B cell (primary cell): ENCODE measurements at regions of chr3 and their contacts with region 1.

Region 1: GRCh38 chr3:187164885-187165543 is 25.7 kb upstream of the RPL39L start:
- DNase-seq: peak; percentile 81
- ATAC-seq: peak; percentile 72
- H3K4me3 ChIP-seq: no peak overlapping the region
- H3K4me3 Mint-ChIP-seq: no peak overlapping the region
- H3K27ac ChIP-seq: no peak overlapping the region
- H3K27ac Mint-ChIP-seq: no peak overlapping the region
- H3K4me1 ChIP-seq: no peaks in the 10 kb centered on the region
- H3K4me1 Mint-ChIP-seq: no peaks in the 10 kb centered on the region
- H3K27me3 ChIP-seq: peaks cover 0 to 6% (median 0%) of the 10 kb centered on the region in 4 experiments
- H3K27me3 Mint-ChIP-seq: peaks cover 23% of the 10 kb centered on the region
- CTCF ChIP-seq: peak; percentile 81

Region 2: DNA sequence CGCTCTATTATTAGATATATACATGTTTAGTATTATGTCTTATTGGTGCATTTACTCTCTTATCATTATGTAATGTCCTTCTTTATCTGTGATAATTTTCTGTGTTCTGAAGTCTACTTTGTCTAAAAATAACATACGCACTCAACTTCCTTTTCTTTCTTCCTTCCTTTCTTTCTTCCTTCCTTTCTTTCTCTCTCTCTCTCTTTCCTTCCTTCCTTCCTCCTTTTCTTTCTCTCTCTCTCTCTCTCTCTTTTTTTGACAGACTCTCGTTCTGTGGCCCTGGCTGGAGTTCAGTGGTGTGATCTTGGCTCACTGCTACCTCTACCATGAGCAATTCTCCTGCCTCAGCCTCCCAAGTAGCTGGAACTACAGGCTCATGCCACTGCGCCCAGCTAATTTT is 307.3 kb before region 1 on chr3:
- CTCF ChIA-PET with region 1: interaction called, 11 read pairs
- POLR2A ChIA-PET with region 1: no interaction called
- intact Hi-C with region 1: no loop called
- DNase-seq: no peak
- ATAC-seq: no peak
- H3K4me3 ChIP-seq: no peak overlapping the region
- H3K4me3 Mint-ChIP-seq: no peak overlapping the region
- H3K27ac ChIP-seq: no peak overlapping the region
- H3K27ac Mint-ChIP-seq: no peak overlapping the region
- H3K4me1 ChIP-seq: no peaks in the 10 kb centered on the region
- H3K4me1 Mint-ChIP-seq: peaks cover 5% of the 10 kb centered on the region
- H3K27me3 ChIP-seq: no peaks in the 10 kb centered on the region
- H3K27me3 Mint-ChIP-seq: no peaks in the 10 kb centered on the region
- CTCF ChIP-seq: no peak

Region 3: GRCh38 chr3:187107989-187108388 is 57.0 kb before region 1 on chr3:
- CTCF ChIA-PET with region 1: interaction called, 223 read pairs
- POLR2A ChIA-PET with region 1: interaction called, 3 read pairs
- intact Hi-C with region 1: loop called (anchors 1 kb)
- DNase-seq: no peak
- ATAC-seq: no peak
- H3K4me3 ChIP-seq: no peak overlapping the region
- H3K4me3 Mint-ChIP-seq: no peak overlapping the region
- H3K27ac ChIP-seq: no peak overlapping the region
- H3K27ac Mint-ChIP-seq: no peak overlapping the region
- H3K4me1 ChIP-seq: peaks cover 2 to 3% of the 10 kb centered on the region in 2 donors
- H3K4me1 Mint-ChIP-seq: peaks cover 3% of the 10 kb centered on the region
- H3K27me3 ChIP-seq: no peaks in the 10 kb centered on the region
- H3K27me3 Mint-ChIP-seq: no peaks in the 10 kb centered on the region
- CTCF ChIP-seq: no peak

Region 4: GRCh38 chr3:187130346-187131066 is 34.5 kb before region 1 on chr3:
- CTCF ChIA-PET with region 1: interaction called, 10 read pairs
- POLR2A ChIA-PET with region 1: no interaction called
- intact Hi-C with region 1: no loop called
- DNase-seq: peak; percentile 84
- ATAC-seq: peak; percentile 92
- H3K4me3 ChIP-seq: peak overlapping the region in 1 of 5 experiments; percentile 28
- H3K4me3 Mint-ChIP-seq: peak overlapping the region; percentile 70
- H3K27ac ChIP-seq: peak overlapping the region; percentile 84 to 90
- H3K27ac Mint-ChIP-seq: peak overlapping the region; percentile 88
- H3K4me1 ChIP-seq: peaks cover 31 to 35% of the 10 kb centered on the region in 2 donors
- H3K4me1 Mint-ChIP-seq: peaks cover 46% of the 10 kb centered on the region
- H3K27me3 ChIP-seq: no peaks in the 10 kb centered on the region
- H3K27me3 Mint-ChIP-seq: no peaks in the 10 kb centered on the region
- CTCF ChIP-seq: no peak

Region 5: GRCh38 chr3:187139126-187139894 is 25.7 kb before region 1 on chr3 and contains the start of gene RPL39L:
- CTCF ChIA-PET with region 1: interaction called, 26 read pairs
- POLR2A ChIA-PET with region 1: no interaction called
- intact Hi-C with region 1: no loop called
- DNase-seq: peak; percentile 95
- ATAC-seq: peak; percentile 95
- H3K4me3 ChIP-seq: peak within 1 kb of the TSS in 4 of 5 experiments; percentile 49 to 68 (median 58)
- H3K4me3 Mint-ChIP-seq: peak within 1 kb of the TSS; percentile 90
- H3K27ac ChIP-seq: peak within 1 kb of the TSS; percentile 77 to 79
- H3K27ac Mint-ChIP-seq: peak within 1 kb of the TSS; percentile 90
- H3K4me1 ChIP-seq: peaks cover 12 to 14% of the 10 kb centered on the region in 2 donors
- H3K4me1 Mint-ChIP-seq: peaks cover 16% of the 10 kb centered on the region
- H3K27me3 ChIP-seq: no peaks in the 10 kb centered on the region
- H3K27me3 Mint-ChIP-seq: no peaks in the 10 kb centered on the region
- CTCF ChIP-seq: peak; percentile 79
- total RNA-seq, gene RPL39L: 2.0 and 3.1 TPM in 2 replicates